Endothelial cell of umbilical vein (primary cell): ENCODE measurements at regions of chr1 and their contacts with region 1.

Region 1: GRCh38 chr1:201447911-201448871 is 20.8 kb downstream of the PHLDA3 start:
- DNase-seq: peak; percentile 57
- H3K4me3 ChIP-seq: no peak overlapping the region
- H3K27ac ChIP-seq: no peak overlapping the region
- H3K4me1 ChIP-seq: no peaks in the 10 kb centered on the region
- H3K27me3 ChIP-seq: peaks cover 0 to 2% of the 10 kb centered on the region in 2 experiments
- CTCF ChIP-seq: peak; percentile 72 to 80
- POLR2A ChIP-seq: no peak

Region 2: GRCh38 chr1:201419746-201420607 is 28.2 kb before region 1 on chr1:
- CTCF ChIA-PET with region 1: no interaction called
- POLR2A ChIA-PET with region 1: no interaction called
- dilution Hi-C with region 1: no loop called
- intact Hi-C with region 1: no loop called
- DNase-seq: no peak
- H3K4me3 ChIP-seq: no peak overlapping the region
- H3K27ac ChIP-seq: no peak overlapping the region
- H3K4me1 ChIP-seq: no peaks in the 10 kb centered on the region
- H3K27me3 ChIP-seq: peaks cover 7 to 18% of the 10 kb centered on the region in 2 experiments
- CTCF ChIP-seq: no peak
- POLR2A ChIP-seq: no peak

Region 3: DNA sequence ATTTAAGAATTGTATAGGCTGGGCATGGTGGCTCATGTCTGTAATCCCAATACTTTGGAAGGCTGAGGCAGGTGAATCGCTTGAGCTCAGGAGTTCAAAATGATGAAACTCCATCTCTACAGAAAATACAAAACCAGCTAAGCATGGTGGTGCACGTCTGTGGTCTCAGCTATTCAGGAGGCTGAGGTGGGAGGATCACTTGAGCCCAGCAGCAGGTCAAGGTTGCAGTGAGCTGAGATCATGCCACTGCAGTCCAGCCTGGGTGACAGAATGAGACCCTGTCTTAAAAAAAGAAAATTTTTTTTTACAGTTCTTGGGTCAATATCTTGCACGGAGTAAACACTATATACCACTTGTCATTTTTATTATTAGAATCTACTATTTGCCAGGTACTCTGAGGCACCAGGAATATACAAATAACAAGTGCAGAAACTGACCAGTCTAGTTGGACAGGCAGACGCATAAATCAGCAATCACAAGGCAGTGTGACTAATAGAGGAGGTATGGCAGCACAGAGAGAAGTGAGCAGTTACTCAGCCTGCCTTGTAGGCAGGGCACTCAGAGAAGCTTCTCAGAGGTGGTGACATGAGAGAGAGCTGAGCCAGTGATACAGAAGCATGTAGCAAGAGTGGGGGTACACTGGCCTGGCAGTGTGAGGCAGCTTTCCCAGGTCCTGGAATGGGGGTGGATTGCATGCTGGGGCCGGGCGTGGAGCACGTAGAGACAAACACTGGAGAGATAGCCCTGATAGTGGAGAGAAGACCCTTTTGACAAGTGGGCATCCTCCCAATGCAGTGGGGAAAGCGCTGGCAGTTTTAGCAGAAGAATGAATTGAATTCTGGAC is 12.8 kb after region 1 on chr1:
- CTCF ChIA-PET with region 1: interaction called, 58 read pairs
- POLR2A ChIA-PET with region 1: interaction called, 6 read pairs
- dilution Hi-C with region 1: no loop called
- intact Hi-C with region 1: no loop called
- DNase-seq: peak; percentile 82
- H3K4me3 ChIP-seq: no peak overlapping the region
- H3K27ac ChIP-seq: no peak overlapping the region
- H3K4me1 ChIP-seq: peaks cover 13% of the 10 kb centered on the region
- H3K27me3 ChIP-seq: no peaks in the 10 kb centered on the region
- CTCF ChIP-seq: no peak
- POLR2A ChIP-seq: peak; percentile 53

Region 4: GRCh38 chr1:201468844-201469511 is 20.8 kb after region 1 on chr1 and contains the start of gene PHLDA3:
- CTCF ChIA-PET with region 1: interaction called, 58 read pairs
- POLR2A ChIA-PET with region 1: interaction called, 3 read pairs
- dilution Hi-C with region 1: no loop called
- intact Hi-C with region 1: loop called (anchors 2 kb)
- DNase-seq: peak; percentile 86
- H3K4me3 ChIP-seq: peak within 1 kb of the TSS; percentile 13 to 85 (median 53)
- H3K27ac ChIP-seq: peak within 1 kb of the TSS; percentile 13
- H3K4me1 ChIP-seq: peaks cover 5% of the 10 kb centered on the region
- H3K27me3 ChIP-seq: peaks cover 3% of the 10 kb centered on the region in 2 experiments
- CTCF ChIP-seq: no peak
- POLR2A ChIP-seq: peak; percentile 83
- total RNA-seq, gene PHLDA3: 29.5 and 35.6 TPM in 2 replicates